B cell (primary cell): ENCODE measurements at regions of chr16 and their contacts with region 1.

Region 1: GRCh38 chr16:46918861-46919792 is 35.0 kb downstream of the GPT2 start:
- DNase-seq: peak; percentile 79
- ATAC-seq: peak; percentile 62
- H3K4me3 ChIP-seq: peak overlapping the region in 3 of 5 experiments; percentile 11 to 53 (median 33)
- H3K4me3 Mint-ChIP-seq: peak overlapping the region; percentile 75
- H3K27ac ChIP-seq: peak overlapping the region; percentile 23 to 54
- H3K27ac Mint-ChIP-seq: peak overlapping the region; percentile 85
- H3K4me1 ChIP-seq: peaks cover 45 to 68% of the 10 kb centered on the region in 2 donors
- H3K4me1 Mint-ChIP-seq: peaks cover 67% of the 10 kb centered on the region
- H3K27me3 ChIP-seq: no peaks in the 10 kb centered on the region
- H3K27me3 Mint-ChIP-seq: no peaks in the 10 kb centered on the region
- CTCF ChIP-seq: peak; percentile 47

Region 2: DNA sequence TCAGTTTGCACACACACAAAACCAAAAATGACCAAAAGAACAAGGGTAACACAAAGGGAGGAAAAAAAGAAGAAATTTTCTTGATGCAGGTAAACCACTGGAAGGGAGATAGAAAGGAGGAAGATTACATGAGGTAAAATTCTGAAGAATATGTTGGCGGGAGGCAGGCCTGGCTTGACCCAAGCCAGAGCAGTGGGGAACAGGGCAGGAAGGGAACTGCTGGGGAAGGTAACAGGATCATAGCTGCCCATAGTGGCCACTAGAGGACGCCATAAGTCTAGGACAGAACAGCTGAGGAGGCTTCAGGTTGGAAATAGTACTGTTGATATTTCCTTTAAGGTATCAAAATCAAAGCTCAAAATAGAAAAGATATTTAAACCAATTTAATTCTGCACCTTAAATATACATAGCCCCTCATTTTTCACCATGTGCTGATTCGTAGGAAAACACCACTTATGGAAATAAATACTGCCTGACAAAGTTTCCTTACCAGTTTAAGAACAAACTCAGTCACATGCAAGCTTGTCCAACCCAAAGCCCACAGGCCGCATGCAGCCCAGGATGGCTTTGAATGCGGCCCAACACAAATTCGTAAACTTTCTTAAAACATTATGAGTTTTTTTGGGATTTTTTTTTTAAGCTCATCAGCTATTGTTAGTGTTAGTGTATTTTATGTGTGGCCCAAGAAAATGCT is 245.7 kb before region 1 on chr16:
- CTCF ChIA-PET with region 1: interaction called, 13 read pairs
- POLR2A ChIA-PET with region 1: no interaction called
- intact Hi-C with region 1: loop called (anchors 2 kb)
- DNase-seq: peak; percentile 78
- ATAC-seq: peak; percentile 92
- H3K4me3 ChIP-seq: no peak overlapping the region
- H3K4me3 Mint-ChIP-seq: no peak overlapping the region
- H3K27ac ChIP-seq: no peak overlapping the region
- H3K27ac Mint-ChIP-seq: no peak overlapping the region
- H3K4me1 ChIP-seq: no peaks in the 10 kb centered on the region
- H3K4me1 Mint-ChIP-seq: no peaks in the 10 kb centered on the region
- H3K27me3 ChIP-seq: no peaks in the 10 kb centered on the region
- H3K27me3 Mint-ChIP-seq: no peaks in the 10 kb centered on the region
- CTCF ChIP-seq: peak; percentile 97

Region 3: DNA sequence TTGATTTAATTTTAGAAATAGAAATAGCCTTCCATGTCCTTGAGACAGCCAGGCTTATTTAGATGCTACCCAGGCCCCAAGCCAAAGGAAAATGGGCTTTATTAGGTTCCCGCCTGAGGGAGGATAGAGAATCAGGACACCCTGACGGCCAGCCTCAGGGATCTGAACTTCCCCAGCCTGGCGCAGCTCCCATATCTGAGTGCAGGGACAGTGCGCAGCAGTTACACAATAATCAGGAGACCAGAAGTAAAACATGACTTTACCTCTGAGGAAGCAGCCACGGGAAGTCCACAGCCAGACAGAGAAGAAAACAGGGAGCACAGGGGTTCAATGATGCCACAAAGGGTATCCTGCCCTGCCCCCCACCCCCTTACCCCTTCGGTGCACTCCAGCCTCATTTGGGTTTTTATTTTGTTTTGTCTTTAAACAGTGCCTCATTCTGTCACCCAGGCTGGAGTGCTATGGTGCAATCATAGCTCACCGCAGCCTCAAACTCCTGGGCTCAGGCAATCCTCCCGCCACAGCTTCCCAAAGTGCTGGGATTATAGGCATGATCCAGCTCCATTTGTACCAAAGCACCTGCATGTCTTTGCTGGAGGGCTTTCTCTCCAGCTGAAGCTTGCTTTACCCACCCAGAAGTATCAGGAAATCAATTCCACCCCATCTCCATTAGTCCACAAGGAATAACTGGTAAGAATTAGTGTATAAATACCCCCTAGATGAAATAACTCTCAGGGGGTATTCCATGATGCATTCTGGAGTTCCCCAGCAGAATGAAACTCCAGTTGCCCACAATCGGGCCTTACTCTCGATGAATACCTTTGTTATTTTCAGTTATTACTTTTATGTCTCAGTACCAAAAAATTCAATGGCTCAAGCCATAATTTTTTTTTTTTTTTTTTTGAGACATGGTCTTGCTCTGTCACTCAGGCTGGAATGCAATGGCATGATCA is 207.7 kb before region 1 on chr16:
- CTCF ChIA-PET with region 1: no interaction called
- POLR2A ChIA-PET with region 1: no interaction called
- intact Hi-C with region 1: no loop called
- DNase-seq: no peak
- ATAC-seq: no peak
- H3K4me3 ChIP-seq: no peak overlapping the region
- H3K4me3 Mint-ChIP-seq: no peak overlapping the region
- H3K27ac ChIP-seq: no peak overlapping the region
- H3K27ac Mint-ChIP-seq: no peak overlapping the region
- H3K4me1 ChIP-seq: peaks cover 15 to 18% of the 10 kb centered on the region in 2 donors
- H3K4me1 Mint-ChIP-seq: peaks cover 14% of the 10 kb centered on the region
- H3K27me3 ChIP-seq: no peaks in the 10 kb centered on the region
- H3K27me3 Mint-ChIP-seq: no peaks in the 10 kb centered on the region
- CTCF ChIP-seq: no peak

Region 4: GRCh38 chr16:46789499-46790414 is 129.4 kb before region 1 on chr16:
- CTCF ChIA-PET with region 1: interaction called, 9 read pairs
- POLR2A ChIA-PET with region 1: no interaction called
- intact Hi-C with region 1: loop called (anchors 5 kb)
- DNase-seq: peak; percentile 89
- ATAC-seq: peak; percentile 94
- H3K4me3 ChIP-seq: peak overlapping the region; percentile 21 to 90 (median 66)
- H3K4me3 Mint-ChIP-seq: peak overlapping the region; percentile 85
- H3K27ac ChIP-seq: peak overlapping the region; percentile 42 to 70
- H3K27ac Mint-ChIP-seq: peak overlapping the region; percentile 81
- H3K4me1 ChIP-seq: peaks cover 36 to 42% of the 10 kb centered on the region in 2 donors
- H3K4me1 Mint-ChIP-seq: peaks cover 52% of the 10 kb centered on the region
- H3K27me3 ChIP-seq: no peaks in the 10 kb centered on the region
- H3K27me3 Mint-ChIP-seq: no peaks in the 10 kb centered on the region
- CTCF ChIP-seq: no peak

Region 5: GRCh38 chr16:46883690-46884512 is 35.2 kb before region 1 on chr16 and contains the start of gene GPT2:
- CTCF ChIA-PET with region 1: interaction called, 20 read pairs
- POLR2A ChIA-PET with region 1: interaction called, 4 read pairs
- intact Hi-C with region 1: loop called (anchors 1 kb)
- DNase-seq: peak; percentile 83
- ATAC-seq: peak; percentile 95
- H3K4me3 ChIP-seq: peak within 1 kb of the TSS; percentile 48 to 84 (median 72)
- H3K4me3 Mint-ChIP-seq: peak within 1 kb of the TSS; percentile 89
- H3K27ac ChIP-seq: no peak within 1 kb of the TSS
- H3K27ac Mint-ChIP-seq: peak within 1 kb of the TSS; percentile 67
- H3K4me1 ChIP-seq: peaks cover 9 to 11% of the 10 kb centered on the region in 2 donors
- H3K4me1 Mint-ChIP-seq: peaks cover 18% of the 10 kb centered on the region
- H3K27me3 ChIP-seq: peaks cover 0 to 5% (median 2%) of the 10 kb centered on the region in 4 experiments
- H3K27me3 Mint-ChIP-seq: no peaks in the 10 kb centered on the region
- CTCF ChIP-seq: no peak
- total RNA-seq, gene GPT2: 9.9 and 11.0 TPM in 2 replicates

Region 6: GRCh38 chr16:46899443-46900143 is 19.5 kb before region 1 on chr16:
- CTCF ChIA-PET with region 1: interaction called, 23 read pairs
- POLR2A ChIA-PET with region 1: no interaction called
- intact Hi-C with region 1: loop called (anchors 1 kb)
- DNase-seq: no peak
- ATAC-seq: no peak
- H3K4me3 ChIP-seq: no peak overlapping the region
- H3K4me3 Mint-ChIP-seq: no peak overlapping the region
- H3K27ac ChIP-seq: no peak overlapping the region
- H3K27ac Mint-ChIP-seq: no peak overlapping the region
- H3K4me1 ChIP-seq: no peaks in the 10 kb centered on the region
- H3K4me1 Mint-ChIP-seq: no peaks in the 10 kb centered on the region
- H3K27me3 ChIP-seq: peaks cover 0 to 3% (median 0%) of the 10 kb centered on the region in 4 experiments
- H3K27me3 Mint-ChIP-seq: no peaks in the 10 kb centered on the region
- CTCF ChIP-seq: no peak

Region 7: DNA sequence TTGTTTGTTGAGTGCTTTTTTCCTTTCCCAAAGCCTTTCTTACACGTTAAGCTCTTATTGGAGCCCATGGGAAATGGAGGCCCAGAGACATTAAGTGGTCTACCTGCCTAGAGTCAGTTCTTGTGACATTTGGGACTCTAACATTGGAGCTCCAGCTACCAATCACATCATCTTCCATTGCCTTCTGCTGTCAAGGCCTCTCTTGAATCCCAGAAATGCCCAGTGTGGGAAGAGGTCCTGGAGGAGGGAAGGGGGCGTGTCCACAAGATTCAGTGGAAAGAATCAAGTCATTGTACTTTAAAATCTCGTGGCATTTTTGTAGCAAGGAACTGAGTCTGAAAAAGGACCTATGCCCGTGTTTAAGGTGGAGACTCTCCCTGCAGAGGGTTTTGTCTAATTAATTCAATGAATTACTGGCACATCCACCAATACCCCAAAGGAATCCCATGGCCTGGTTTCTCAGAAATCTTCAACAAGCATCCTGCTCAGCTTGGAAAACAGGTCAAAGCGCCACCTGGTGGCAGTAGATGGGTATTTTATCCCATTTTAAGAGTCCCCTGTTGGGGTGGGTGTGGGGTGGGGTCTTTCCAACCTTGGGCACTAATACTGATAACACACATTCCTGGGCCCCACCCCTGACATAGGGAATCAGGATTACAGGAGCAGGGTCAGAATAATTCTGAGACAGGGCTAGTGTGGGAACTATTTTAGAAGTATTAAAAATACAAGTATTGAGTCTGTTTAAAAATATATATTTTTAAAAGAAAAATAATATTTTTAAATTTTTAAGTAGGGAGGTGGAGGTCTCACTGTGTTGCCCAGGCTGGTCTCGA is 10.4 kb before region 1 on chr16:
- CTCF ChIA-PET with region 1: interaction called, 81 read pairs
- POLR2A ChIA-PET with region 1: interaction called, 5 read pairs
- intact Hi-C with region 1: loop called (anchors 1 kb)
- DNase-seq: peak; percentile 72
- ATAC-seq: peak; percentile 37
- H3K4me3 ChIP-seq: no peak overlapping the region
- H3K4me3 Mint-ChIP-seq: no peak overlapping the region
- H3K27ac ChIP-seq: no peak overlapping the region
- H3K27ac Mint-ChIP-seq: peak overlapping the region; percentile 74
- H3K4me1 ChIP-seq: peaks cover 40 to 63% of the 10 kb centered on the region in 2 donors
- H3K4me1 Mint-ChIP-seq: peaks cover 49% of the 10 kb centered on the region
- H3K27me3 ChIP-seq: no peaks in the 10 kb centered on the region
- H3K27me3 Mint-ChIP-seq: no peaks in the 10 kb centered on the region
- CTCF ChIP-seq: peak; percentile 85

Region 8: DNA sequence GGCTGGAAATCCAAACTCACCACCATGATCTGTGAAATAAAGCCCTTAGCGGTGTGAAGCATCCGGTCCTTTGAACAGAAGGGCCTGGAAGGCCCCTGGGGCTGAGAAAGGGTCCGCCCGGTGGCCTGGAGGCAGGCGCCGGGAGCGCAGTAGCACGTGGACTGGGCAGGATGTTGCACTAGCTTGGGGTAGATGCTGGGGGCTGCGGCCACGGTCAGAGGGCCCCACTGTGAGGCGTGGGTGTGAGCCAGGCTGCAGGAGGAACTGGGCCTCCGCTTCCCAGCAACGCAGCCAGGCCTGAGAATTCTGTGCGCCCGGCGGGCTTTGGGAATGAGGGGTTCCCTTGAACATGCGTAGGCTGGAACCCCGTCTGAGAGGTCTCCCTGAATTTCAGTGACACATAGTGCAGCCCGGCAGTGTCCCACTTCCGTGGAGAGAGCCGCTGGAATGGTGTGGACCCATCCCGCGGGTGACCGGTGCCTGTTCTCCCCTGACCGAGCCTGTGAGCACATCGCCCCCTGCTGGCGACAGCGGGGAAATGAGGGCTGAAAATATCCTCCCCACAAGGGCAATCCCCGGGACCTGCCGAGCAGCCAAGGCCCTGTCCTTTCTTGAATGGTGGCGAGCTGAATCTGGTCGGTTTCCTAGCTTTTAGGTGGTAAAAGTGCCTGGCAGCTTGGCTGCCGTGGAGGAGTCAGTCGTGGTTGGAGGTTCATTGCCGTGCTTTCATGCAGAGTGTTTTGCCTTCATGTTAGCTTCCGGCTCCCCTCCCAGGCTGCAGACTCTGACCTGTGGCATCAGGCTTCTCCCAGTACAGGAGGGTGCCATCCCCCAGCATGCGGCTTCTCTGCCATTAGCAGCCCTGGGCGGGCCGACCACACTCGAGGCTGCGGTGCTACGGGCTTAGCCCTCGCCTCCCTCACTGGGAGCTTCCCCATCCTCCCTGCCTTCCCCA is 10.5 kb after region 1 on chr16:
- CTCF ChIA-PET with region 1: interaction called, 59 read pairs
- POLR2A ChIA-PET with region 1: no interaction called
- intact Hi-C with region 1: loop called (anchors 1 kb)
- DNase-seq: peak; percentile 76
- ATAC-seq: peak; percentile 73
- H3K4me3 ChIP-seq: no peak overlapping the region
- H3K4me3 Mint-ChIP-seq: no peak overlapping the region
- H3K27ac ChIP-seq: no peak overlapping the region
- H3K27ac Mint-ChIP-seq: no peak overlapping the region
- H3K4me1 ChIP-seq: peaks cover 5 to 18% of the 10 kb centered on the region in 2 donors
- H3K4me1 Mint-ChIP-seq: peaks cover 7% of the 10 kb centered on the region
- H3K27me3 ChIP-seq: no peaks in the 10 kb centered on the region
- H3K27me3 Mint-ChIP-seq: no peaks in the 10 kb centered on the region
- CTCF ChIP-seq: peak; percentile 96

Region 9: DNA sequence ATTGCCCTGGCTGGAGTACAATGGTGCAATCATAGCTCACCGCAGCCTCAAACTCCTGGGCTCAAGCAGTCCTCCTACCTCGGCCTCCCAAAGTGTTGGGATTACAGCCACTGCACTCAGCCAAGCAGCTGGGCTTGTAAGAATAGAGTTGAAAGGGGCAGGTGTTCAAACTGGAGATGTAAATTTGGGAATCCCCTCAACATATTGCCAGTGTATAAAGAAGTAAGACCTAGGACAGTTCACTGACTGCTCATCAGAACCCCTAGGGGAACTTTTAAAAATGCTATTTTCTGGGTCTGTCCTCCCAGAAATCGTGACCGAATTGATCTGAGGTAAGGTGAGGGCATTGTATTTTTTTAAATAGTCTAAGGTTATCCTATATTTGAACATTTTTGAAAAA is 63.2 kb after region 1 on chr16:
- CTCF ChIA-PET with region 1: no interaction called
- POLR2A ChIA-PET with region 1: no interaction called
- intact Hi-C with region 1: no loop called
- DNase-seq: no peak
- ATAC-seq: no peak
- H3K4me3 ChIP-seq: no peak overlapping the region
- H3K4me3 Mint-ChIP-seq: no peak overlapping the region
- H3K27ac ChIP-seq: no peak overlapping the region
- H3K27ac Mint-ChIP-seq: no peak overlapping the region
- H3K4me1 ChIP-seq: no peaks in the 10 kb centered on the region
- H3K4me1 Mint-ChIP-seq: no peaks in the 10 kb centered on the region
- H3K27me3 ChIP-seq: no peaks in the 10 kb centered on the region
- H3K27me3 Mint-ChIP-seq: no peaks in the 10 kb centered on the region
- CTCF ChIP-seq: no peak

Region 10: GRCh38 chr16:47311738-47312505 is 392.8 kb after region 1 on chr16:
- CTCF ChIA-PET with region 1: no interaction called
- POLR2A ChIA-PET with region 1: no interaction called
- intact Hi-C with region 1: no loop called
- DNase-seq: no peak
- ATAC-seq: no peak
- H3K4me3 ChIP-seq: peak overlapping the region in 1 of 5 experiments; percentile 9
- H3K4me3 Mint-ChIP-seq: no peak overlapping the region
- H3K27ac ChIP-seq: peak overlapping the region in 1 of 2 donors; percentile 73
- H3K27ac Mint-ChIP-seq: no peak overlapping the region
- H3K4me1 ChIP-seq: peaks cover 4 to 16% of the 10 kb centered on the region in 2 donors
- H3K4me1 Mint-ChIP-seq: peaks cover 13% of the 10 kb centered on the region
- H3K27me3 ChIP-seq: no peaks in the 10 kb centered on the region
- H3K27me3 Mint-ChIP-seq: no peaks in the 10 kb centered on the region
- CTCF ChIP-seq: no peak